Dorsolateral prefrontal cortex (tissue), 120 donors: ENCODE measurements at regions of chr20 and their contacts with region 1.

Region 1: DNA sequence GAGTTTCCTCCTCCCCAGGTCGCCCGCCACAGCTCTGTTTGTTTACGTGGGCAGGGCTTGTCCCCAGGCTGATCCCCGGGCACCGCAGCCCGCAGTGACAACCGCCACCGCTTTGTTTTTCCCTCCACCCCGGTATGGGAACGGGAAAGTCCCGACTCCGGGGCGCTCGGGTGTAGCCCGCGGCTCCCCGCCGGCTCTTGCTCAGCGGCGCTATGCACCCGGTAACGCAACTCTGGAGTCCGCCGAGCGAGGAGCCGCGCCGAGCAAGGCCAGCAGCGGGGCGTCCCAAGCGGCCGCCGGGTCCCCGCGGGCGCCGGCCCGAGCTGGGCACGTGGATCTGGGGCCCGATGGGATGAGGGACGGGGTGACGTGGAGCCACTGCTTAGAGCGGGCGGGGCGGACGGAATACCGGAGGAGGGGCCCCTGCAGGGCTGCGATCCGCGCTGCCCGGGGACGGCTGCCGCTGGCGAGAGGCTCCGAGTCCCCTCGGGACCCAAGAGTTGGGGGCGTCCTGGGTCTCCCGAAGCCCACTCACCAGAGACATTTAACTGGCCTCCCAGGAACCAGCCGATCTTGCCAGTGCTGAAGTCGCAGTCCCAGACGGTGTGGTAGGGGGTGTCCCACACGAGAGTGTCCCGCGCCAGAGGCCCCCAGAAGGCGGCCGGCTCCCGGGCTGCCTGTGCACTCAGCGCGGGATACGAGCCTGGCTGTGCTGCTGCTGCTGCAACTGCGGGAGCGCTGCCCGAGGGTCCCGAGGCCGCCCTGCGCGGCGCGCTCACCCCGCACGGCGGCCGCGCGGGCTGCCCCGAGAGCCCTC is 497 bp downstream of the ACSS1 start:
- DNase-seq: peak in 9 of 10 donors; percentile 60 to 86 (median 75)
- H3K4me3 ChIP-seq: peak overlapping the region; percentile 55 to 95 (median 80)
- H3K27ac ChIP-seq: peak overlapping the region; percentile 78 to 99 (median 94)
- H3K27me3 ChIP-seq: peaks cover 0 to 5% (median 0%) of the 10 kb centered on the region in 45 donors
- CTCF ChIP-seq: peak in 23 of 56 donors; percentile 8 to 42 (median 23)

Region 2: DNA sequence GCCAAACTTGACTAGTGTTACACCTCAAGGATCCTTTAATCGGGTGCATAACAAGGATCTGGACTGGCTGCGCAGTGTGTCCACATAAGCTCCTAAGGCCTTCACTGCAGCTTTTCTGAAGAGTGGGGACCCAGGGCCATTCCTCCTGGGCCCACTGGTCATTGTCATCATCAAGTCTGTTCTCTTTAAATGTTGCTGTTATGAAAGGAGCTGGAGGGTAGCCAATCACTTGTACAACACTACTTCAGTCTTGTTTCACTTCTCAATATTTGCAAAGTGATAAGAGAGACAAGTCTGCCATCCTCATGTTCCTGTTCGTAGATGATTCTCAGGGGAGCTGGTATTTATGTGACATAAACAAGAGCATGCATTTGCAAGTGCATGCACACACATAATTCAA is 438.2 kb before region 1 on chr20:
- intact Hi-C with region 1: no loop called
- DNase-seq: no peak
- H3K4me3 ChIP-seq: no peak overlapping the region
- H3K27ac ChIP-seq: peak overlapping the region in 12 of 59 donors; percentile 16 to 44 (median 30)
- H3K27me3 ChIP-seq: no peaks in the 10 kb centered on the region
- CTCF ChIP-seq: no peak

Region 3: DNA sequence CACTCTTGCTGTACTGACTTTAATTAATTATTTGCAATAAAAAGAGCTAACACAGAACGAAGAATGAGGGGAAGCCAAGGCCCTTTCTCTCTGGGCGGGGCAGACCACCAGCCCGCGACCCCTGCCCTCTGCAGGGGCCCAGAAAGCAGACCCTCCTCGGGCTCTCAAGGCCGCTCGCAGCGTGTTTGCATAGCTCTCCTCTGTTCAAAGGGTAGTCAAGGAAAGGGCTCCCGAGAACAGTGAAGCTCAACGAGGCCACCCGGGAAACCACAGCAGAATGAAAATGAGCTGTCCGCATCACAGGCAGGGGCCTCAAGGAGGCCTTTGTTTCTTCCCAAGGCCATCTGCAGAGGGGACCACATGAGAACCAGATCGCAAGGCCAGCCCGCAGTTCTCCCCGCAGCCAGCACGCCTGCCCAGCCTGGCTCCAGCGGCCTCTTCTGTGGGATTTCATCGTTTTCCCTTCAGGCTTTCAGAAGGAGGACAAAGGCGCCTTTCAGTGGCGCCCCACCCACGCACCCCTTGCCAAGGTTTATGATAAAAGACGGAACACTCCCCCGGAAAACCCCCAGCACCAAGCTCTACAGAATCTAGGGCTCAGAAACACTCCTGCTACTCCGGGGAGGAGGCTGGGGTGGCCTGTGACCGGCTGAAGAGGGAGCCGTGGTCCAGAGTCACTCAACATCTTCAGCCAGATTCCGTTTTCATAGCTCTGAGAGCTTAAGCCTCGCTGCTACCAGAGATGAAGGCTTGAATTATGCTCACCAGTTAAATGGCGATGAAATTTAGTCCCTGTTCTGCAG is 24.8 kb before region 1 on chr20:
- intact Hi-C with region 1: loop called (anchors 1 to 2 kb)
- DNase-seq: peak; percentile 53 to 97 (median 94)
- H3K4me3 ChIP-seq: peak overlapping the region in 41 of 59 donors; percentile 1 to 54 (median 29)
- H3K27ac ChIP-seq: peak overlapping the region; percentile 75 to 99 (median 97)
- H3K27me3 ChIP-seq: no peaks in the 10 kb centered on the region
- CTCF ChIP-seq: peak in 24 of 56 donors; percentile 3 to 55 (median 25)

Region 4: GRCh38 chr20:25039396-25040115 is 17.9 kb before region 1 on chr20:
- intact Hi-C with region 1: loop called in 1 of 2 experiments (anchors 2 kb)
- DNase-seq: peak in 9 of 10 donors; percentile 55 to 82 (median 79)
- H3K4me3 ChIP-seq: peak overlapping the region in 4 of 59 donors; percentile 1 to 11 (median 6)
- H3K27ac ChIP-seq: peak overlapping the region; percentile 58 to 99 (median 97)
- H3K27me3 ChIP-seq: no peaks in the 10 kb centered on the region
- CTCF ChIP-seq: no peak

Region 5: DNA sequence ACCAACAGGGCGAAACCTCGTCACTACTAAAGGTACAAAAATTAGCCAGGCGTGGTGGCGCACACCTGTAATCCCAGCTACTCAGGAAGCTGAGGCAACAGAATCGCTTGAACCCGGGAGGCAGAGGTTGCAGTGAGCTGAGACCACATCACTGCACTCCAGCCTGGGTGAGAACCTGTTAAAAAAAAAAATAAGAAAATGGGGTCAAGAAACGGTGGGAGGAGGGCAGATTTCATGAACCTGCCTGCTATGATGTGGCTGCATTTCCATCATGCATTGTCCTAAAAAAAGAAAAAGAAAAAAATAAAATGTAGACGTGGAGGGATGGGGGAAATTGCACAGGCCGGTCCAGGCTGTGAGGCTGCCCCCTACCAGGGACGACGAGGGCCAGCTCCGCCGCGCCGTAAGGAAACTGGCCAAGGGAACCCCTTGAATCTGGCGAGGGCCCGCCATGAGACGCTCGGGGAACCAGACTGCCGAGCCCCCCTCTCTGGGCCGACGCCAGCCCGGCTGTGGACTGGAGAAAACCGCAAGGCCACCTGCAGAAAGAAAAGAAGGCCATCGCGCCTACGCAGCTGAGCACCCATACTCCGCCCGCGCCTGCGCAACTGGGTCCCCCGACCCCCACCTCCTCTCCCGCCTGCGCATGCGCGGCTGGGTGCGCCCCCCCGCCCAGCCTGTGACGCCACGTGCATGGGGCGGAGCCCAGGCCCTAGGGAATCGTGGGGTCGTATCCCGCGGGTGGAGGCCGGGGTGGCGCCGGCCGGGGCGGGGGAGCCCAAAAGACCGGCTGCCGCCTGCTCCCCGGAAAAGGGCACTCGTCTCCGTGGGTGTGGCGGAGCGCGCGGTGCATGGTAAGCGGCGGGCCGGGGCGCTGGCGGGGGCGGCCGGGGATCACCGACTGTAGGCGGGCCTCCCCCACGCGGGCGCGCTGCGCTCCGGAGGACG is 137.8 kb after region 1 on chr20 and contains the start of gene ENTPD6:
- intact Hi-C with region 1: loop called in 1 of 2 experiments (anchors 5 kb)
- DNase-seq: peak; percentile 84 to 97 (median 90)
- H3K4me3 ChIP-seq: peak within 1 kb of the TSS; percentile 77 to 100 (median 95)
- H3K27ac ChIP-seq: peak within 1 kb of the TSS; percentile 79 to 100 (median 94)
- H3K27me3 ChIP-seq: no peaks in the 10 kb centered on the region
- CTCF ChIP-seq: peak in 51 of 56 donors; percentile 14 to 70 (median 44)
- total RNA-seq, gene ENTPD6: 90.8 to 200 (median 142) TPM